CD4-positive, alpha-beta T cell (primary cell): ENCODE measurements at regions of chr17 and their contacts with region 1.

Region 1: GRCh38 chr17:48074315-48075081 is 26.3 kb downstream of the NFE2L1 start:
- DNase-seq: peak; percentile 55 to 84 (median 70)
- ATAC-seq: peak; percentile 86
- H3K4me3 ChIP-seq: no peak overlapping the region
- H3K4me3 Mint-ChIP-seq: no peak overlapping the region
- H3K27ac ChIP-seq: no peak overlapping the region
- H3K27ac Mint-ChIP-seq: no peak overlapping the region
- H3K4me1 ChIP-seq: no peaks in the 10 kb centered on the region
- H3K4me1 Mint-ChIP-seq: no peaks in the 10 kb centered on the region
- H3K27me3 ChIP-seq: no peaks in the 10 kb centered on the region
- H3K27me3 Mint-ChIP-seq: no peaks in the 10 kb centered on the region
- CTCF ChIP-seq: peak; percentile 85

Region 2: DNA sequence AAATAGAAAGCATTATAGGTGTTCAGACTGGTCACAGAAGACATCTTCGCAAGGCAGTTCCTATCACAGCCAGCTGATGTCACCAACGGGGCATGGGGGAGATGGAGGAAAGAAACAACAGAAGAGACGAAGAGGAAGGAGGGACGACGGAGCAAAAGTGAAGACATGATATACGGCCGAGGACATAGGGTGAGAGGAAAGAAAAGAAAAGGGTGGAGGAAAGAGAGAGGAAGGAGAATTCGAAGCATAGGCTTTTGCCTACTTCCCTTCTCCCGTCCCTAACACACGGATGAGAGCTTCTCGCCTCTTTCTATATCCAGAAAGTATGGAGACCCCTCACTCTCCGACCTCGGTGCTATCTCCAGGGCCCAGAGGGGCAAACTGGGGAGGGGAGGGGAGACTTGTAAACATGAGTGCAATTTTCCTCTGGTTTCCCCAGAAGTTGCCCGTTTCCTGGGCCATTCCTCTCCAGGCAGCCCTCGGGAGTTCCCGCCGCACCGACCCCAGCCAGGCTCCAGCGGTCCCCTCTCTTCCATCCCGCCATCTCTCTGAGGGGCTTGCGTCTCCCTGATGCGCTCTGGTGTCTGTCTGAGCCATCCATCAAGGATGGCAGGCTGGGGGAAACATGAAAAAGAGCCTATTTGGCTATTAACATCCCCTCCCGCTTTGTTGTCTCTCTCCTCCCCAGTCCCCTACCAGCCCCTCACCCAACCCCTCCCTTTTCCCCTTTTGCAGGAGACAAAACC is 62.9 kb before region 1 on chr17:
- CTCF ChIA-PET with region 1: no interaction called
- POLR2A ChIA-PET with region 1: no interaction called
- intact Hi-C with region 1: no loop called
- DNase-seq: peak in 11 of 14 experiments; percentile 18 to 68 (median 39)
- ATAC-seq: peak; percentile 76
- H3K4me3 ChIP-seq: peak overlapping the region; percentile 43
- H3K4me3 Mint-ChIP-seq: peak overlapping the region; percentile 71
- H3K27ac ChIP-seq: no peak overlapping the region
- H3K27ac Mint-ChIP-seq: no peak overlapping the region
- H3K4me1 ChIP-seq: peaks cover 14% of the 10 kb centered on the region
- H3K4me1 Mint-ChIP-seq: peaks cover 16% of the 10 kb centered on the region
- H3K27me3 ChIP-seq: peaks cover 32 to 46% of the 10 kb centered on the region in 2 experiments
- H3K27me3 Mint-ChIP-seq: peaks cover 66% of the 10 kb centered on the region
- CTCF ChIP-seq: peak; percentile 46

Region 3: DNA sequence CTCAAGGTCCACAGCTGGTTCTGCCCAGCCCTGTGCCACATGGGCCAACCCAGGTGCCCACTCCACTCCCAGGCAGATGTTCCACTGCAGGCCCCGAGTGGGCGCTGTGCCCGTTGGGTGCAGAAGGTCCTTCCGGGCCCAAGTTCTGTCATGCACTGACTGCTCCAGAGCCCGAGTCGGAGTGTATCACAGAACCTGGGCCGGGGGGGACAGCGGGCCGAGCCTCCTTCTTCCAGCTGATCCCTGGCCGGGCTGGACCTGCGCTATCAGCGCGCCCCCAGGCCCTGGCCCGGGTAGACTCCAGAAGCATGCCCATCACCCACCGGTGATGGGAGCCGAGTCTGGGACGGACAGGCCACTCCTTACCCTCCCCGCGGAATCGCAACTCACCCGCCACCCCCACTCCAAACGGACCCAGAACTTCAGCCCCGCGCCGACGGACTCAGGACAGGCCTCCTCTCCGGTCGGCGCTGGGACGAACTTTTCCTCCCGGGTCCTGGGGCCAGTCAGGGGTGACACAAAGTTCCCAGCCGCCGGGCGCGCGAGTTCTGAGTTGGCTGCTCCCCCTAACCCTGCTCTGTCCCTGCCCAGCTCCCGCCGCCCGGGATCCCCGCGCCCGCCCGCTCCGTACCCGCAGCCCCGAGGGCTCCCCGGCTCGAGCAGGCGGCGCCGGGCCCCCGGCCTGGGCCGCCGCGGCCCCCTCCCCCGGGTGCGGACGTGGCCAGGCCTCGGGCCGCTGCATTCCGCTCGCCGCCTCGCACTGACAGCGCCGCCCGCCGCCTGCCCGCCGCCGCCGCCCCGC is 37.3 kb before region 1 on chr17 and contains the start of gene COPZ2:
- CTCF ChIA-PET with region 1: no interaction called
- POLR2A ChIA-PET with region 1: no interaction called
- intact Hi-C with region 1: loop called in 1 of 2 experiments (anchors 1 kb)
- DNase-seq: peak; percentile 46 to 84 (median 61)
- ATAC-seq: peak; percentile 100
- H3K4me3 ChIP-seq: peak within 1 kb of the TSS; percentile 76
- H3K4me3 Mint-ChIP-seq: peak within 1 kb of the TSS; percentile 97
- H3K27ac ChIP-seq: no peak within 1 kb of the TSS
- H3K27ac Mint-ChIP-seq: no peak within 1 kb of the TSS
- H3K4me1 ChIP-seq: peaks cover 15% of the 10 kb centered on the region
- H3K4me1 Mint-ChIP-seq: peaks cover 9% of the 10 kb centered on the region
- H3K27me3 ChIP-seq: peaks cover 17 to 26% of the 10 kb centered on the region in 2 experiments
- H3K27me3 Mint-ChIP-seq: peaks cover 56% of the 10 kb centered on the region
- CTCF ChIP-seq: peak; percentile 72
- total RNA-seq, gene COPZ2: 0.47 to 0.88 TPM